GM12878 (cell line): ENCODE measurements at regions of chr10 and their contacts with region 1.

Region 1: GRCh38 chr10:32131388-32131787 is 75.2 kb upstream of the KIF5B start:
- DNase-seq: no peak
- ATAC-seq: no peak
- H3K4me3 ChIP-seq: no peak overlapping the region
- H3K27ac ChIP-seq: no peak overlapping the region
- H3K4me1 ChIP-seq: no peaks in the 10 kb centered on the region
- H3K27me3 ChIP-seq: no peaks in the 10 kb centered on the region
- CTCF ChIP-seq: no peak
- EP300 ChIP-seq: no peak
- POLR2A ChIP-seq: no peak
- RAD21 ChIP-seq: no peak

Region 2: GRCh38 chr10:31912898-31913852 is 218.2 kb before region 1 on chr10:
- CTCF ChIA-PET with region 1: no interaction called
- POLR2A ChIA-PET with region 1: no interaction called
- RAD21 ChIA-PET with region 1: no interaction called
- SMC1A ChIA-PET with region 1: no interaction called
- in situ Hi-C with region 1: no loop called
- intact Hi-C with region 1: no loop called
- DNase-seq: no peak
- ATAC-seq: no peak
- H3K4me3 ChIP-seq: no peak overlapping the region
- H3K27ac ChIP-seq: no peak overlapping the region
- H3K4me1 ChIP-seq: no peaks in the 10 kb centered on the region
- H3K27me3 ChIP-seq: no peaks in the 10 kb centered on the region
- CTCF ChIP-seq: no peak
- EP300 ChIP-seq: no peak
- POLR2A ChIP-seq: no peak
- RAD21 ChIP-seq: no peak

Region 3: GRCh38 chr10:32149252-32149955 is 18.0 kb after region 1 on chr10:
- CTCF ChIA-PET with region 1: no interaction called
- POLR2A ChIA-PET with region 1: interaction called, 10 read pairs
- RAD21 ChIA-PET with region 1: no interaction called
- SMC1A ChIA-PET with region 1: no interaction called
- in situ Hi-C with region 1: no loop called
- intact Hi-C with region 1: no loop called
- DNase-seq: peak; percentile 45
- ATAC-seq: peak; percentile 98
- H3K4me3 ChIP-seq: no peak overlapping the region; the same call in 1 of the 2 replicates
- H3K27ac ChIP-seq: peak overlapping the region; percentile 56
- H3K4me1 ChIP-seq: peaks cover 16% of the 10 kb centered on the region
- H3K27me3 ChIP-seq: no peaks in the 10 kb centered on the region
- CTCF ChIP-seq: no peak
- EP300 ChIP-seq: peak in 1 of 2 experiments; percentile 65; a peak in 2 of 4 replicates
- POLR2A ChIP-seq: no peak
- RAD21 ChIP-seq: no peak

Region 4: DNA sequence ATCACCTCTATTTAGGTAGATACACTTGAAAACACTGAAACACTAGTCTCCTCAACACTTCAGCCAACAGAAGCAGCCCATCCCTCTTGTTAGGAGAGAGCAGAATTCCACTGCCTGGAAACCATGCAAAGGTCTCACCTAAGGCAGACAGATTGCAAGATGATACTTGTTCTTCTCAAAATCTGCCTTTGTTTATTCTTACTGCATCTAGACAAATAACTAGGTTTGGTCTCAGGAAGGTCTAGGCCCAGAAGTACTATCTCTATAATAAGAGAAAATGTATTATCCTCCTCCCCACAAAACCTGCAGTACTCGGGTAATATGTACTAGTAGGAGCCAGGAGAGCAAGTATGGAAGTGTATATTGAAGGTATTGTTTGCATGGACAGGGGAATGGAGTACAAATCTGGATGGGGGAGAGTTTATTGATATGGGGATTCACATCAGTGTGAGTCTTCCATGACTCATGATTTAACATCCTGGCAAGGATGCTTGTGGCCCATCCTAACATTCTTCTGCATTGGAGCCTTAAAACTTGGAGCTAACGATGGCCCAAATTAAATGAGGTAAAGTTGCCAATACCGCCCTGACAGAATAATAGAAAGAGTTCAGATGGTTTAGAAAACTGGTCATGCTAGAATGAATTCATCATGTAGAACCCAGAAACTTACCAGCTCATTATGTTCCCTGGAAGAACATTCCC is 106.4 kb after region 1 on chr10:
- CTCF ChIA-PET with region 1: no interaction called
- POLR2A ChIA-PET with region 1: no interaction called
- RAD21 ChIA-PET with region 1: no interaction called
- SMC1A ChIA-PET with region 1: no interaction called
- in situ Hi-C with region 1: no loop called
- intact Hi-C with region 1: no loop called
- DNase-seq: no peak
- ATAC-seq: no peak
- H3K4me3 ChIP-seq: no peak overlapping the region
- H3K27ac ChIP-seq: no peak overlapping the region
- H3K4me1 ChIP-seq: no peaks in the 10 kb centered on the region
- H3K27me3 ChIP-seq: no peaks in the 10 kb centered on the region
- CTCF ChIP-seq: no peak
- EP300 ChIP-seq: no peak
- POLR2A ChIP-seq: no peak
- RAD21 ChIP-seq: no peak

Region 5: GRCh38 chr10:32263300-32263699 is 131.9 kb after region 1 on chr10:
- CTCF ChIA-PET with region 1: no interaction called
- POLR2A ChIA-PET with region 1: no interaction called
- RAD21 ChIA-PET with region 1: no interaction called
- SMC1A ChIA-PET with region 1: no interaction called
- in situ Hi-C with region 1: no loop called
- intact Hi-C with region 1: no loop called
- DNase-seq: no peak
- ATAC-seq: peak; percentile 21; the same call in 1 of the 3 replicates
- H3K4me3 ChIP-seq: no peak overlapping the region
- H3K27ac ChIP-seq: no peak overlapping the region
- H3K4me1 ChIP-seq: no peaks in the 10 kb centered on the region
- H3K27me3 ChIP-seq: no peaks in the 10 kb centered on the region
- CTCF ChIP-seq: no peak
- EP300 ChIP-seq: no peak
- POLR2A ChIP-seq: no peak
- RAD21 ChIP-seq: no peak